HEK293 (cell line): ENCODE measurements at regions of chr17 and their contacts with region 1.

Region 1: GRCh38 chr17:4420692-4421131 is 13.0 kb upstream of the SPNS3 start:
- H3K4me3 ChIP-seq: no peak overlapping the region
- H3K27ac ChIP-seq: no peak overlapping the region
- H3K4me1 ChIP-seq: no peaks in the 10 kb centered on the region
- CTCF ChIP-seq: peak; percentile 67

Region 2: GRCh38 chr17:4395111-4395478 is 25.6 kb before region 1 on chr17:
- CTCF ChIA-PET with region 1: no interaction called
- POLR2A ChIA-PET with region 1: no interaction called
- H3K4me3 ChIP-seq: no peak overlapping the region
- H3K27ac ChIP-seq: no peak overlapping the region
- H3K4me1 ChIP-seq: no peaks in the 10 kb centered on the region
- CTCF ChIP-seq: no peak

Region 3: GRCh38 chr17:4433515-4434031 is 12.9 kb after region 1 on chr17 and contains the start of gene SPNS3:
- CTCF ChIA-PET with region 1: interaction called, 16 read pairs
- POLR2A ChIA-PET with region 1: no interaction called
- H3K4me3 ChIP-seq: no peak within 1 kb of the TSS
- H3K27ac ChIP-seq: no peak within 1 kb of the TSS
- H3K4me1 ChIP-seq: no peaks in the 10 kb centered on the region
- CTCF ChIP-seq: no peak